ENCODE measurements at regions of chr11 and their contacts with region 1.

Region 1: GRCh38 chr11:12888525-12889158 is 120.5 kb upstream of the RASSF10 start:
- DNase-seq: peak; percentile 69 to 83
- ATAC-seq: peak; percentile 84 to 85
- H3K4me3 ChIP-seq: no peak overlapping the region
- H3K27ac ChIP-seq: peak overlapping the region; percentile 61 to 82 (median 70)
- H3K4me1 ChIP-seq: peaks cover 25 to 32% of the 10 kb centered on the region in 2 donors
- H3K27me3 ChIP-seq: no peaks in the 10 kb centered on the region
- CTCF ChIP-seq: peak; percentile 63 to 81 (median 75)
- POLR2A ChIP-seq: no peak

Region 2: DNA sequence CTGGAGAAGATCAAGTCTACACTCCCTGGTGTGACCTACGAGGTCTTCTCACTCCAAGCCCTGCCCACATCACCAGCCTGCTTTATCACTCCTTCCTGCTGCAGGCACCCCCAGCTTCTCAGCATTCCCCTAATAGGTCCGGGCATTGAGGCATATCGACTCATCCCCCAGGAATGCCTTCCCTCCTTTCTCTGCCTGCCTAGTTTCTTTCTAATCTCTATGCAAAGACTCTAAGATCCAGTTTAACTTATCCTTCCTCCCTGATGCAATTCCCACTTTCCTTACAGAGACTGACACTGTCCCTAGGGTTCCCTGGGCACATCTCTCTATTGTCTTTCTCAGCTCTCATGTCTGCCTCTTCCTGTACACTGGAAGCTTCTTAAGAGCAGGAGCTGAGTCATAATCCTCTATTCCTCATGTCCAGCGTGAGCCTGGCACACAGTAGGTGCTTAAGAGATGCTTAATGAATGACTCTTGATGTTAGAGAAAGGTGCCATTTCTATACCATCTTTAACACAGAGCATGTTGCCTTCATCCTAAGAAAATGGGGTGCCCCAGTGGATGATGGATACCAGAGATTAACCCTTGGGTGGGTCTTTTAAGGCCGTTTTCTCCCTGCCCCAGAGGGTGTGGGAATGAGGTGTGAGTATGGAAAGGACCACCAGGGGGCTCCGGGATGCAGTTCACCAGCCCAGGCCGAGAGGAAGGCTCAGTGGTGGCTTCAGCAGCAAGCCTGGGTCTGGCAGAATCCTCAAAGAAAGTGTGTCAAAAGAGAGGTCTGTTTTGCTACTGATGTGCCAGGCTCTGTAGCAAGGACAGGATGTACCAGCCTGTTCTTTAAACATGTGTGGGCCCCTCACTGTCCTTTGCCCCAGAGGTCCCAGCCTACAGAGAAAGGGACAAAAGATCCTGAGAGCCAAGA is 476.6 kb before region 1 on chr11:
- in situ Hi-C with region 1: loop called (anchors 5 to 10 kb)
- intact Hi-C with region 1: no loop called
- DNase-seq: peak; percentile 34 to 66
- ATAC-seq: peak; percentile 76 to 82
- H3K4me3 ChIP-seq: no peak overlapping the region
- H3K27ac ChIP-seq: peak overlapping the region; percentile 38 to 65 (median 56)
- H3K4me1 ChIP-seq: peaks cover 34 to 35% of the 10 kb centered on the region in 2 donors
- H3K27me3 ChIP-seq: no peaks in the 10 kb centered on the region
- CTCF ChIP-seq: peak; percentile 65 to 80 (median 77)
- POLR2A ChIP-seq: no peak

Region 3: DNA sequence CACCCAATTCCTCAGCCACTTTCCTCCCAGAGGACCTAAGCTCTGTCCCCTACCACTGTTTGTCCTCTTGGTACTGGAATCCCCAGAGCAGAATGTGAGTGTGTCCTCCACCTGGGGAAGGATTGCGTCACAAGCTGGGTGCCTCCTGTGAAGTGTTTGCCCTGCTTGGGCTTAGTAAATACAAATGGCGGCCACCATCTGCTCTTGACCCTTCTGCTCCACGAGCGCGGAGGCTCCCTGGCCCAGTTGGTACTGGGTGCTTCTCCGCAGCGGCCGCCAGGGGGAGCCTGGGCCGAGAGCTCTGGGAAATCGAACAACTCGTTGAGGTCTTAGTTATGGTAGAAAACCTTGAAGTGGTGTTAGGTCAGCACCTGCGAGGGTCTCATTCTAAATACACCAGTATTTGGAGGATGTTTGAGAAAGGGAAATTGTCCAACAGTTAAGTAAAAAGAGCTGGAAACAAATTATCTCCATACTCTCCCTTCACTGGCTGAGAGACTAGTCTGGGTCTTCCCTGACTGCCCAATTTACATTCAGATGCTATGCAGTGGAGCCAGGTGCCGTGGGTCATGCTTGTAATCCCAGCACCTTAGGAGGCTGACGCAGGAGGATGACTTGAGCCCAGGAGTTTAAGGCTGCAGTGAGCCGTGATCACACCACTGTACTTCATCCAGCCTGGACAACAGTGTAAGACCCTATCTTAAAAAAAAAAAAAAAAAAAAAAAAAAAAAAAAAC is 289.1 kb before region 1 on chr11:
- in situ Hi-C with region 1: loop called in 3 of 4 experiments (anchors 5 to 10 kb)
- intact Hi-C with region 1: loop called (anchors 1 kb)
- DNase-seq: peak in 1 of 2 donors; percentile 36
- ATAC-seq: peak; percentile 65 to 86
- H3K4me3 ChIP-seq: no peak overlapping the region
- H3K27ac ChIP-seq: no peak overlapping the region
- H3K4me1 ChIP-seq: peaks cover 0 to 6% of the 10 kb centered on the region in 2 donors
- H3K27me3 ChIP-seq: no peaks in the 10 kb centered on the region
- CTCF ChIP-seq: peak; percentile 48 to 82 (median 66)
- POLR2A ChIP-seq: no peak